ENCODE measurements at regions of chr5 and their contacts with region 1.

Region 1: DNA sequence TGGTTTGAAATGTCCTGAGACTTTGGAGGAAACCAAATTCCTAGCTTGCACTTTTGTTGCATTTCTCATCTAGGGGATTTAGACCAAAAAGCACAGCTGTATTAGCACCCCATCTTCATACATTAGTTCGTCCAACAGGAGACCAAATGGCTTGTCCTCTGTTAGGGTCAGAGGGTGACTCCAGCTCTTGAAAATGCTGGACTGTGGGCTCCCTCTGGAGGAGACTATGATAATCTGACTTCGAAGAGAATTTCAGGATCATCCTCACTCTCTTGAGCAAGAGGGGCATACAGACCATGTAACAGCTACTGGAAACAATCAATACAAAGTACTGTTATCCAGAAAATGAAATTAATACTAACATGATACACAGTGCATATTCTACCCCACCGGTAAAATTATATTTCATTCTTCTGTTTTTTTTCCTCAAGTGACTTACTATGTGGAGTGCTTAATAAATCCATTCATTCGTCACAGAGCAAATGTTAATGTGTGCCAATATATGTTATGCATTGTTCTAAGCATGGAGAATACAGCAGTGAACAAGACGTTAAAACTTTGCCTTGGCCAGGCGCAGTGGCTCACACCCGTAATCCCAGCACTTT is 63.7 kb upstream of the PPP2CA start:
- DNase-seq: no peak
- ATAC-seq: peak; percentile 92

Region 2: GRCh38 chr5:134162592-134162991 is 127.0 kb before region 1 on chr5:
- intact Hi-C with region 1: no loop called
- DNase-seq: no peak
- ATAC-seq: no peak

Region 3: GRCh38 chr5:134184155-134185135 is 105.2 kb before region 1 on chr5:
- intact Hi-C with region 1: loop called (anchors 1 kb)
- DNase-seq: peak; percentile 80
- ATAC-seq: peak; percentile 86

Region 4: DNA sequence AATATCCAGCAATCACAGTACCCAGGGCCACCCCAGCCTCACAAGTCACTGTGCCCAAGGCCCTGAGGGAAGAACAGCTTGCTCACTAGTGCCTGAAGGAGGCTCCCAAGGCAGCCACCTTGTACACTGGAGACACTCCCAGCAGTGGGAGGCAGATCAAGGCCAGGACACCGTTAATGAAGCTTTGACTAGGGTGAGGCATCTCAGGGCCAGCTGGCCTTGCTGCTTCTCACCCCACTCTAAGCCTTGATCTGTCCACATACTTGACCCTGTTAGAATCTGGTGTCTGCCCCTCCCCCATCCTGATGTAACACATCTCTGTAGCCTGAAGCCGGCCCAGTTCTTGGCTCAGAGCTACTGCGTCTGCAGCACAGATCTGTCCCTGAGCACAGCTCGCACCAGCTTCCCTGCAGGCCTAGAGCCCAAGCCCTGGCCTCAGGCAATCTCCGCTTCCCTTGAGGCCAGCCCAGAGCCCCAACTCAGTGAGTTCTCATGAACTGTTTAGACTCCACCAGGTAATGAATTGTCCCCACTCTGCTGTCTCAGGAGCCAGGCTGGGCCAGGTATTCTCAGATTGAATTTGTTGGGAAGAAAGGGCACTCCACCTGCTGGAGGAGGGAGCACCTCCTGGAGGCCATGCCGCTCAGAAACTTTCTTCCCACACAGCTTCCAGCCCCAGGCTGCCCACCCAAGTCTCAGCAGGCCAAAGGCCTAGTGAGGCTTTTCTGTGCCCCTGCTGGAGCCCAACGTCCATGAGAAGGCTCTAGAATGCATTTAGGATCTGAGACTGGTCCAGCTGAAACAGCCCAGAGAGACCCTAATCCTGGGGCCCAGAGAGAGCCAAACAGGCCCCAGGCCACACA is 222.4 kb after region 1 on chr5:
- intact Hi-C with region 1: no loop called
- DNase-seq: peak; percentile 89
- ATAC-seq: peak; percentile 92

Measured in Right ventricle myocardium inferior (tissue), 1 donor.